Activated CD4-positive, alpha-beta T cell treated with anti-CD3 and anti-CD28 coated beads, Interleukin-2, amount 10 ng/mL, durations not matched to agents 24 days and 14 days (primary cell): ENCODE measurements at regions of chr11 and their contacts with region 1.

Region 1: GRCh38 chr11:74024261-74025029 is 15.6 kb upstream of the UCP3 start:
- DNase-seq: peak; percentile 66
- H3K4me3 Mint-ChIP-seq: no peak overlapping the region
- H3K27ac Mint-ChIP-seq: peak overlapping the region; percentile 65
- H3K4me1 Mint-ChIP-seq: peaks cover 35% of the 10 kb centered on the region
- H3K27me3 Mint-ChIP-seq: no peaks in the 10 kb centered on the region

Region 2: DNA sequence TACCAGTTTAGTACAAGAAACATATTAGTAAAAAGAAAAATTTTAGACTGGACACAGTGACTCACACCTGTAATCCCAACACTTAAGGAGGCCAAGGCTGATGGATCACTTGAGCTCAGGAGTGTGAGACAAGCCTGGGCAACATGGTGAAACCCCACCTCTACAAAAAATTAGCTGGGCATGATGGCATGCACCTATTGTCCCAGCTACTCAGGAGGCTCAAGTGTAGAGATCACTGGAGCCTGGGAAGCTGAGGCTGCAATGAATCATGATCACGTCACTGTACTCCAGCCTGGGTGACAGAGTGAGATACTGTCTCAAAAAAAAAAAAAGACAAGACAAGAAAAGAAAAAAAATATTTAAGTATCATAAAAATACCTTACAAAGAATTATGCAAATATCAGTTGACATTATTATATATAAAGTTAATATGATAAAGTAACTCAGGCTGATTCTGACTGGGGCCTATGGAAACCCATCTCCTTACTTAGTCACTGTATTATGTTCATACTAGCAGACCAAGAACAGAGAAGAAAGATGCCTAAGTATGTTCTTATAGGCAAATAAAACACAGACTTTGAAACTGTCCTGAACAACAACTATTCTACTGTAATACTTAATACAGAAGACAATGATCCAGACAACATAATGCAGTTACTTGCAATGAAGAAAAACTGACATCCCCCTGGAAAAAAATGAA is 453.9 kb before region 1 on chr11:
- intact Hi-C with region 1: no loop called
- DNase-seq: peak; percentile 37
- H3K4me3 Mint-ChIP-seq: no peak overlapping the region
- H3K27ac Mint-ChIP-seq: no peak overlapping the region
- H3K4me1 Mint-ChIP-seq: peaks cover 1% of the 10 kb centered on the region
- H3K27me3 Mint-ChIP-seq: no peaks in the 10 kb centered on the region

Region 3: DNA sequence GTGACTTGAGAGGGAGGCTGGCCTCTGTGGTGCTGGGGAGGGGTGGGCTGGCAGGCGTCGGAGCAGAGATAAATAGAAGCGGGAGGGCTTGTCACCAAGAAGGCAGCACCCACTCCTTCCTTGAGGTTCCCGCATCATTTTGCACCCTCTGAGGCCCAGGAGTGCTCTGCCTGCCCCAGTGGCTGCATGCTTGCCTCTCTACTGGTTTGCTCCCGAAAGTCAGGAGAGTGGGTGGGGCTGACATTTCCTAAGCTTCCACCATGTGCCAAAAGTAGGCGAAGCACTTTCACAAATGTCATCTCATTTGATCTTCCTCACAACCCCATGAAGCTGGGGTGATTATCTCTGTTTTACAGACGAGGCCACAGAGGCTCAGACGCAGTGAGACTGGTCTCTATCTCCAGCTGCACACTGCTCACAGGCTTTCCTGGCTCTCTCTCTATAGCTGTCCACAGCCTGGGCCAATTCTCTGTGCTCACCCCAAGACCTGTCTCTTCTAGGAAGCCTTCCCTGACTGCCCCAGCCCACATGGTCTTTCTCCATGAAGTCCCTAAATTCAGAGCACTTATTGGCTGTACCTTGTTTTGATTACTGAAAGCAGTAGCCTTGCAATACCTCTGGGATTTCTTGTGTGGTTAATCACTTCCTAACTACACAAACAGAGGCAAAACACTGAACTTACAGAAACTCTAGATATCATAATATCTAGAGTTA is 12.9 kb before region 1 on chr11:
- intact Hi-C with region 1: loop called (anchors 1 kb)
- DNase-seq: peak; percentile 89
- H3K4me3 Mint-ChIP-seq: peak overlapping the region; percentile 44
- H3K27ac Mint-ChIP-seq: peak overlapping the region; percentile 95
- H3K4me1 Mint-ChIP-seq: peaks cover 76% of the 10 kb centered on the region
- H3K27me3 Mint-ChIP-seq: no peaks in the 10 kb centered on the region

Region 4: DNA sequence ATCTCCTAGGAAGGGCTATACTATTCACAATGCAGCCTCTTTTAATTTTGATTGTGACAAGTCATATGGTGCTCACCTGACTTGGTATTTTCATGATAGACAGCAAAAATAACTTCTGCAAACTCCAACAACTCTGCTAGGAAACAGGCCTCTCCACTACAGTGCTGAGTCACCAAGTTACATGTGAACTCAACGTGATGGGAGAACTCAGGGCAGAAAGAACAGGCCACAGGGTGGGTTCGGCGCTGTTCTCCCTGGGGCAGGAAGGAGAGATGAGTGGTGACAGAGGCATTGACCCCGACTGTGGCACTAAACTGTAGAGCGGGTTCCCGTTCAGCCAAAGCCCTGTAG is 61.1 kb after region 1 on chr11:
- intact Hi-C with region 1: no loop called
- DNase-seq: no peak
- H3K4me3 Mint-ChIP-seq: no peak overlapping the region
- H3K27ac Mint-ChIP-seq: peak overlapping the region; percentile 19
- H3K4me1 Mint-ChIP-seq: peaks cover 2% of the 10 kb centered on the region
- H3K27me3 Mint-ChIP-seq: no peaks in the 10 kb centered on the region

Region 5: GRCh38 chr11:74311352-74311926 is 287.0 kb after region 1 on chr11 and contains the start of gene P4HA3:
- intact Hi-C with region 1: no loop called
- DNase-seq: peak; percentile 82
- H3K4me3 Mint-ChIP-seq: peak within 1 kb of the TSS; percentile 76
- H3K27ac Mint-ChIP-seq: no peak within 1 kb of the TSS
- H3K4me1 Mint-ChIP-seq: peaks cover 3% of the 10 kb centered on the region
- H3K27me3 Mint-ChIP-seq: peaks cover 40% of the 10 kb centered on the region
- total RNA-seq, gene P4HA3: not detected in 2 replicates